ENCODE measurements at regions of chr5 and their contacts with region 1.

Region 1: GRCh38 chr5:171379961-171380360 is 7.7 kb upstream of the NPM1 start:
- DNase-seq: no peak
- H3K4me3 ChIP-seq: no peak overlapping the region
- H3K27ac ChIP-seq: no peak overlapping the region
- H3K4me1 ChIP-seq: no peaks in the 10 kb centered on the region
- H3K27me3 ChIP-seq: no peaks in the 10 kb centered on the region
- CTCF ChIP-seq: no peak

Region 2: DNA sequence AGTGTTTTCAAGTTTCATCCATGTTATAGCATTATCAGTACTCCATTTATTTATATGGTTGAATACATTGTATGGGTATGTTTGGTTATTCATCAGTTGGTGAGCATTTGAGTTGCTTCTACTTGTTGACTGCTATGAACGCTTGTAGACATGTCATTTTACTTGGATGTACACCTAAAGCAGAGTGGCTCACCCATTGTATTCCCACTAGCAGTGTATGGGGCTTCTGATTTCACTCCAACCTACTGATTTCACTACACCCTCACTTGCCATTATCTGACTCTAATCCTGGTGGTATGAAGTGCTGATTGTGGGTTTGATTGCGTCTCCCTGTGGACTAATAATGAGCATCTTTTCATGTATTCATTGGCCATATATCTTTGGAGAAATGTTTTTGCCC is 17.2 kb after region 1 on chr5:
- intact Hi-C with region 1: loop called (anchors 2 kb)
- DNase-seq: no peak
- H3K4me3 ChIP-seq: no peak overlapping the region
- H3K27ac ChIP-seq: no peak overlapping the region
- H3K4me1 ChIP-seq: no peaks in the 10 kb centered on the region
- H3K27me3 ChIP-seq: no peaks in the 10 kb centered on the region
- CTCF ChIP-seq: no peak